ENCODE measurements at regions of chr22 and their contacts with region 1.

Region 1: GRCh38 chr22:41022470-41023298 is 69.7 kb upstream of the EP300 start:
- DNase-seq: peak; percentile 94
- ATAC-seq: peak; percentile 95

Region 2: DNA sequence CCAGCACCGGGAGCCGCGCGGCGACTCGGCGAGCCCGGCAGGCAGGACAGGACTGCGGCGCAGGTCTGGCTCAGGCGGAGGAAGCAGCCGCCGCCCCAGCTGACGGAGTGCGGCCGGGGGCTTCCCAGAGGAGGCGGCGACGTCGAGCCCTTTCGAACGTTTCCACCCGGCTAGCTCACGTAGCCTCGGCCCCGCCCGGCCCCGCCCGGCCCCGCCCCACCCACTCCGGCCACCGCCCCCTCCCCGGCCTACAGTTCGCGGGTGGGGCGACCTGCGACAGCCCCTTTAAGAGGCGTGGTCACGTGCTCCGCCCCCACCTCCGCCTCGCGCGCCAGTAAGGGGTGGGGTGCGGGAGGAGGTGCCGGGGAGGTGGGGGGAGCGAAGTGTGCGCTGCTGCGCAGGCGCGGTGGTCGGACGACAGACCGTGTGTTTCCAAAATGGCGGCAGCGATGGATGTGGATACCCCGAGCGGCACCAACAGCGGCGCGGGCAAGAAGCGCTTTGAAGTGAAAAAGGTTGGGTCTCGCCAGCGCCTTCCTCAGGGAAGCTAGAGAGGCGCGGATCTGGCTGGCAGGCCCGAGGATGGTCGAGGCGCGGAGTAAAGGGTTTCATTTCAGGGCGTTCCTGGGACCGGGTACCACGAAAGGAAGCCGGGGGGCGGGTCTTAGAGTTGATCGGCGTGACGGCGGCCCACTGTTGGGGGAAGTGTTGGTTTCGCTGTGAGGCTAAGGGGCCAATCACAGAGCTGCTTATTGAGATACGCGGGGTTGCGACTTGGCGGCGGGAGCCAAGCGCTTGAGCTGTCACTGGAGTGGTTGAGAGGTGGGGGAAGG is 71.5 kb before region 1 on chr22 and contains the start of gene RBX1:
- intact Hi-C with region 1: loop called in 1 of 2 experiments (anchors 5 kb)
- DNase-seq: peak; percentile 98
- ATAC-seq: peak; percentile 96 to 97
- total RNA-seq, gene RBX1: 59.3 to 61.4 TPM

Measured in left cardiac atrium (tissue), 4 donors.